ENCODE measurements at regions of chr20 and their contacts with region 1.

Region 1: GRCh38 chr20:33653218-33653899 is 8.8 kb upstream of the C20orf144 start:
- DNase-seq: peak; percentile 63
- ATAC-seq: peak; percentile 68

Region 2: DNA sequence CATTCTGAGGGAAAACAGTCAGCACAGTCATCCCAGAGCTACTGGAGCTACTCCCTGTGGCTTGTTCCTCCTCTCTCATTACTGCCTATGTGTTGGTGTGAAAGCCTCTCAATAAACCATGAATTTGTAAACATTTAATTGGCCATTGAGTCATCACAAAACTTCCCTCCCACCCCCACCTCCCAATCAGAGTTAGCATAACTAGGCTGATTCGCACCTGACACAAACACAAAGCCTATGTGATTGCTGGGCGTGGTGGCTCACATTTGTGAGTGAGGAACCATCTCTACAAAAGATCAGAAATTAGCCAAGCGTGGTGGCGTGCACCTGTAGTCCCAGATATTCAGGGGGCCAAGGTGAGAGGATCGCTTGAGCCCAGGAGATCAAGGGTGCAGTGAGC is 192.6 kb before region 1 on chr20:
- intact Hi-C with region 1: loop called (anchors 5 kb)
- DNase-seq: no peak
- ATAC-seq: no peak

Measured in left ventricle myocardium superior (tissue), 1 donor.